Activated naive CD4-positive, alpha-beta T cell treated with anti-CD3 and anti-CD28 coated beads for 36 hours (primary cell): ENCODE measurements at regions of chr4 and their contacts with region 1.

Region 1: DNA sequence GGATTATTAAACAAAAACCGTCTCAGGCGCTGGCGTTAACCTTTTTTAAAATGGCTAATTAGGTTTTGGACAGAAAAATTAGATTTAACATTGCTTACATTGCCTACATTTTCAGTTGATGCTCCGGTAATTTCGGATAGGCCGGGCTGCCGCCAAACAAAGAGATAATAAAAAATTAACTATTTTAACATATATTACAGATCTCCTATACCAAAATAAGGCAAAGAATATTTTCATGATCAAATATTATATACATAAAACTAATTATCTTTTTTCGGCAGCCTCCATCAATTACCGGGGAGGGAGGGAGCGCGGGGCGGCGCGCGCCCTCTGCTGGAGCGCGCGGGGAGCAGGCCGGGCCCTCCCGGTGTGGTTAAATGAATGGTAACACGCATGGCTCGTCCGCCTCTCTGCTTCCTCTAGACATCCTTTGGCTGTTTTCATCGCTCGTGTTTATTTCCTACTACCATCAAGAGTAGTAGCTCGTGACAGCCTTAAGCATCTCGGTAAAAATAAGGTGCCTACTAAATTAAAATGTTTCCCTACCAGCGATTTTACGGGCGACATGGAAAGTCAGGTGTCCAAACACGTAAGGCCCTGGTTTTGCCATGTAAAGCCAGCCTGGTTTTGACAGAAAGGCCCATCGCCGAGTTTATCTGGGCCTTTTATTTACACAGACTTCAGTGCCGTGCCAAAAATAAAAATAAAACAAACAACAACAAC is 52.4 kb upstream of the TMEM33 start:
- DNase-seq: peak; percentile 63
- H3K4me3 Mint-ChIP-seq: peak overlapping the region; percentile 39
- H3K27ac Mint-ChIP-seq: no peak overlapping the region
- H3K4me1 Mint-ChIP-seq: peaks cover 17% of the 10 kb centered on the region
- H3K27me3 Mint-ChIP-seq: peaks cover 44% of the 10 kb centered on the region

Region 2: GRCh38 chr4:41865306-41865980 is 17.3 kb before region 1 on chr4:
- CTCF ChIA-PET with region 1: interaction called, 7 read pairs
- intact Hi-C with region 1: loop called (anchors 2 kb)
- DNase-seq: no peak
- H3K4me3 Mint-ChIP-seq: no peak overlapping the region
- H3K27ac Mint-ChIP-seq: no peak overlapping the region
- H3K4me1 Mint-ChIP-seq: peaks cover 15% of the 10 kb centered on the region
- H3K27me3 Mint-ChIP-seq: peaks cover 57% of the 10 kb centered on the region